ENCODE measurements at regions of chr7 and their contacts with region 1.

Region 1: GRCh38 chr7:138459413-138460175 is 465 bp upstream of the TRIM24 start:
- DNase-seq: peak; percentile 99
- H3K4me3 Mint-ChIP-seq: peak overlapping the region; percentile 78
- H3K27ac Mint-ChIP-seq: peak overlapping the region; percentile 47
- H3K4me1 Mint-ChIP-seq: peaks cover 17% of the 10 kb centered on the region
- H3K27me3 Mint-ChIP-seq: peaks cover 2% of the 10 kb centered on the region

Region 2: DNA sequence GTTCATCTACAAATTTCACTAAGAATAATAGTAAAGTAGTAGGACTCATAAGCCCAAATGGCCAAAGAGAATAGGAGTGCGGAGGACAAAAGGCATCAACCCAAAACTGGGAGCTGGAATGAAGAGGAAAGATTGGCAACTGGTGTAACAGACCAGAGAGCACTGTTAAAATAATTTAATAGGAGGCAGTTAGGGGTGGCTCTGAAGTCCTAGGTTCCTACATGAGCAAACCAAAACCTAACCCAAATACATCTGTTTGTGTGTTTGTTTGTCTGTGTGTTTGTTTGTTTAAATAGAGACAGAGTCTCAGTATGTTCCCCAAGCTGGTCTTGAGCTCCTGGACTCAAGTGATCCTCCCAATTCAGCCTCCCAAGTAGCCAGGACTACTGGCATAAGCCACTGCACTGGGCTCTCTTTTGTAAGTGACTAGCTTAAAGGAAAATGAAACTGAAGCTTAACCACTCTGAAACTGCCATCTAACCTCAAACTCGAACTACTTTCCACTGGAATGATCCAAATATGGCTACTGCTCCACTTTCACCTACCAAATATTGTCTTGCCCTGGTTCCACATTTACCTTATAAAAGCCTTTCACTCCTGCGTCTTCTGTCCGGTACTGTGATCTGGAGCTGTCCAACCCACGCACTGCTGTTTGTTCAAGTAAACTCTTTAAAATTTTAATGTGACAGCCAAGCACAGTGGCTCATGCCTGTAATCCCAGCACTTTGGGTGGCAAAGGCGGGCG is 288.5 kb before region 1 on chr7:
- intact Hi-C with region 1: loop called (anchors 5 kb)
- DNase-seq: peak; percentile 72
- H3K4me3 Mint-ChIP-seq: peak overlapping the region; percentile 2
- H3K27ac Mint-ChIP-seq: no peak overlapping the region
- H3K4me1 Mint-ChIP-seq: peaks cover 24% of the 10 kb centered on the region
- H3K27me3 Mint-ChIP-seq: peaks cover 33% of the 10 kb centered on the region

Region 3: GRCh38 chr7:138449580-138449979 is 10.0 kb before region 1 on chr7:
- intact Hi-C with region 1: no loop called
- DNase-seq: peak; percentile 73
- H3K4me3 Mint-ChIP-seq: no peak overlapping the region
- H3K27ac Mint-ChIP-seq: no peak overlapping the region
- H3K4me1 Mint-ChIP-seq: no peaks in the 10 kb centered on the region
- H3K27me3 Mint-ChIP-seq: peaks cover 9% of the 10 kb centered on the region

Region 4: GRCh38 chr7:138478499-138478908 is 18.9 kb after region 1 on chr7:
- intact Hi-C with region 1: loop called (anchors 2 kb)
- DNase-seq: no peak
- H3K4me3 Mint-ChIP-seq: no peak overlapping the region
- H3K27ac Mint-ChIP-seq: no peak overlapping the region
- H3K4me1 Mint-ChIP-seq: peaks cover 30% of the 10 kb centered on the region
- H3K27me3 Mint-ChIP-seq: no peaks in the 10 kb centered on the region

Region 5: GRCh38 chr7:138625849-138626230 is 166.2 kb after region 1 on chr7:
- intact Hi-C with region 1: loop called (anchors 1 kb)
- DNase-seq: peak; percentile 70
- H3K4me3 Mint-ChIP-seq: peak overlapping the region; percentile 42
- H3K27ac Mint-ChIP-seq: peak overlapping the region; percentile 27
- H3K4me1 Mint-ChIP-seq: peaks cover 31% of the 10 kb centered on the region
- H3K27me3 Mint-ChIP-seq: peaks cover 2% of the 10 kb centered on the region